Panc1 (cell line): ENCODE measurements at regions of chr14 and their contacts with region 1.

Region 1: GRCh38 chr14:104650057-104650981 is 39.1 kb upstream of the INF2 start:
- DNase-seq: no peak
- ATAC-seq: peak; percentile 92
- H3K4me3 ChIP-seq: peak overlapping the region; percentile 37 to 50
- H3K27ac ChIP-seq: peak overlapping the region; percentile 80
- H3K4me1 ChIP-seq: peaks cover 4% of the 10 kb centered on the region
- H3K27me3 ChIP-seq: no peaks in the 10 kb centered on the region
- CTCF ChIP-seq: peak; percentile 97

Region 2: DNA sequence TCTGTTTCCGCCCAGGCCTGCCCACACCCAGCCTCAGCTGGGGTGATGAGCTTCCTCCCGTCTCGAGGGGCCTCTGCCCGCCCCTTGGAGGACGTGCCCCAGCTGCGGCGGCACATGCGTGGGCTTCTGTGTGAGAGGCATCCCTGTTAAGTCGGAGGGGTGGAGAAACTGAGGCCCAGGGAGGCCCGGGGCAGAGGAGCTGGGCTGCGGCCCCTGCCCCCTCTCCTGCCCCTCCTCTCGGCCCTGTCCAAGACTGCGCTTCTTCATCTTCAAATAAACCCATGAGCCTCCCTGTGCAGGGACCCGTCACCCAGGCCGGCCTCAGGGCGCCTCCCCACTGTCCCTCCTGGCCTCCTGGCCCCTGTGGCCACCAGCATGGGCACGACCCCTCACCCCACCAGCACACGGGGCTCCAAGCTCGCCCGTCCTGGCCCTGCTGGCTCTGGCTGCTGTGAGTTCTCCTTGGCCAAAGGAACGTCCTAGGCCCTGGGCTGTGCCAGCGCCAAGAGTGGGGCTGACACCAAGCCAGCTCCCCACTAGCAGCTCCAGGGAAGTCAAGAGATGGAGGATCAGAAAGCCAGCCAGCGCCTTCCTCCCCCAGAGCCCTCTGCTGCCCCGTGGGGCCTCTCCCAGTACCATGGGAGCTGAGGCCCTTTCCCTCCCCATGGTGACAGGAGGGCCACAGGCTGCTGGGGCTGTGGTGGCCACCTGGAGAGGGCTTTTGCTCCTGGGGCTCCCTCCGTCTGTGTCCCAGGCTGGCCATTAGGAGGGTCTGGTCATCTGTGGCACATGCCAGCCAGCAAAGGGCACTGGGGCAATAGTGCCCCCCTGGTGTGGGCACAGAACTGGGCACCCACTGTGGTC is 331.5 kb before region 1 on chr14:
- CTCF ChIA-PET with region 1: no interaction called
- POLR2A ChIA-PET with region 1: no interaction called
- in situ Hi-C with region 1: no loop called
- intact Hi-C with region 1: no loop called
- DNase-seq: no peak
- ATAC-seq: no peak
- H3K4me3 ChIP-seq: no peak overlapping the region
- H3K27ac ChIP-seq: no peak overlapping the region
- H3K4me1 ChIP-seq: no peaks in the 10 kb centered on the region
- H3K27me3 ChIP-seq: no peaks in the 10 kb centered on the region
- CTCF ChIP-seq: no peak

Region 3: DNA sequence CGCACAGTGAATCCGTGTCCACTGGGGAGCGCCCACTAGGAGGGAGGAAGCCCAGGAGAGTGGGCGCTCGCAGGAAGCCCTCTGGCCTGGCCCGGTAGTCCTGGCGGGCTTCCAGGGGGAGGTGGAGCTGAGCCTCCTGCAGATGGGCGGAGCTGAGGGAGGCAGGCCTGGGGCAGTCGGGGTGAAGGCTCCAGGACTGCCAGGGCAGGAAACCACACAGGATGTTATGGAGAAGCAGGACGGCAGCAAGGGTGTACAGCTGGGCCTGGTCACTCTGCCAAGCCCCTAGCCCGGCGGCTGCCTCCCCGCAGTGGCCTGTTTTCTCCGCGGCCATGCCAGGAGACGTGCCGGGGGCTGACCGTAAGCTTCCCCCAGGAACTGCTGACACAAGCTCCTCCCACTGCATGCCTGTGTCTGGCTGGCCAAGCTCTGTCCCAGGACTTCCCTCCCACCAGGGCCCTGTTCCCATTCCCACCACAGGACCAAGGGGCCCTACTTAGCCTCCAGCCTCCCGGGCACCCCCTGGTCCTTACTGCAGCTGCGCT is 214.2 kb before region 1 on chr14:
- CTCF ChIA-PET with region 1: no interaction called
- POLR2A ChIA-PET with region 1: no interaction called
- in situ Hi-C with region 1: no loop called
- intact Hi-C with region 1: no loop called
- DNase-seq: no peak
- ATAC-seq: no peak
- H3K4me3 ChIP-seq: no peak overlapping the region
- H3K27ac ChIP-seq: no peak overlapping the region
- H3K4me1 ChIP-seq: no peaks in the 10 kb centered on the region
- H3K27me3 ChIP-seq: no peaks in the 10 kb centered on the region
- CTCF ChIP-seq: no peak

Region 4: GRCh38 chr14:104708606-104709268 is 58.4 kb after region 1 on chr14:
- CTCF ChIA-PET with region 1: no interaction called
- POLR2A ChIA-PET with region 1: no interaction called
- in situ Hi-C with region 1: no loop called
- intact Hi-C with region 1: loop called (anchors 5 kb)
- DNase-seq: no peak
- ATAC-seq: peak; percentile 54
- H3K4me3 ChIP-seq: no peak overlapping the region
- H3K27ac ChIP-seq: peak overlapping the region; percentile 72
- H3K4me1 ChIP-seq: peaks cover 40% of the 10 kb centered on the region
- H3K27me3 ChIP-seq: no peaks in the 10 kb centered on the region
- CTCF ChIP-seq: peak; percentile 92